ENCODE measurements at regions of chr4 and their contacts with region 1.

Region 1: GRCh38 chr4:114659386-114660008 is 60.9 kb downstream of the UGT8 start:
- DNase-seq: no peak
- ATAC-seq: peak; percentile 92
- H3K4me3 Mint-ChIP-seq: no peak overlapping the region
- H3K27ac Mint-ChIP-seq: peak overlapping the region; percentile 46
- H3K4me1 Mint-ChIP-seq: peaks cover 14% of the 10 kb centered on the region
- H3K27me3 Mint-ChIP-seq: no peaks in the 10 kb centered on the region
- CTCF ChIP-seq: no peak

Region 2: DNA sequence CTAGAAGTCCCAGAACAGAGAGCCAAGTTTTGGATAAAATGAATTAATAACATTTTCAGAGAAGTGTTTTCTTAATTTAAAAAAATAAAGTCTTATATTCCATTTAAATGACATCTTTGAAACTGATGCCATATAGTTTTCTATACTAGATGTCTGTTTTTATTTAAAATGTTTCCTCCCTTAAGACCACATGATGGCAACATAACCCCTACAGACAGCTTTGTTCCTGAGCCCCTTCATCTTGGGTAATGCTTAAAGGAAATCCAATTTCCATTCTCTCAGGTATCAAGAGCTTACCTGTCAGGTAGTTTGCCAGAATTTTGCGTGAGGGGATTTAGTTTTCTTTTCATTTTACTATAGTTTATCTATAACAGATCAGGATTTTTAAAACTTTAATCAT is 242.3 kb before region 1 on chr4:
- CTCF ChIA-PET with region 1: interaction called, 8 read pairs
- POLR2A ChIA-PET with region 1: no interaction called
- intact Hi-C with region 1: loop called (anchors 1 kb)
- DNase-seq: no peak
- ATAC-seq: no peak
- H3K4me3 Mint-ChIP-seq: no peak overlapping the region
- H3K27ac Mint-ChIP-seq: no peak overlapping the region
- H3K4me1 Mint-ChIP-seq: no peaks in the 10 kb centered on the region
- H3K27me3 Mint-ChIP-seq: peaks cover 1% of the 10 kb centered on the region
- CTCF ChIP-seq: no peak

Region 3: DNA sequence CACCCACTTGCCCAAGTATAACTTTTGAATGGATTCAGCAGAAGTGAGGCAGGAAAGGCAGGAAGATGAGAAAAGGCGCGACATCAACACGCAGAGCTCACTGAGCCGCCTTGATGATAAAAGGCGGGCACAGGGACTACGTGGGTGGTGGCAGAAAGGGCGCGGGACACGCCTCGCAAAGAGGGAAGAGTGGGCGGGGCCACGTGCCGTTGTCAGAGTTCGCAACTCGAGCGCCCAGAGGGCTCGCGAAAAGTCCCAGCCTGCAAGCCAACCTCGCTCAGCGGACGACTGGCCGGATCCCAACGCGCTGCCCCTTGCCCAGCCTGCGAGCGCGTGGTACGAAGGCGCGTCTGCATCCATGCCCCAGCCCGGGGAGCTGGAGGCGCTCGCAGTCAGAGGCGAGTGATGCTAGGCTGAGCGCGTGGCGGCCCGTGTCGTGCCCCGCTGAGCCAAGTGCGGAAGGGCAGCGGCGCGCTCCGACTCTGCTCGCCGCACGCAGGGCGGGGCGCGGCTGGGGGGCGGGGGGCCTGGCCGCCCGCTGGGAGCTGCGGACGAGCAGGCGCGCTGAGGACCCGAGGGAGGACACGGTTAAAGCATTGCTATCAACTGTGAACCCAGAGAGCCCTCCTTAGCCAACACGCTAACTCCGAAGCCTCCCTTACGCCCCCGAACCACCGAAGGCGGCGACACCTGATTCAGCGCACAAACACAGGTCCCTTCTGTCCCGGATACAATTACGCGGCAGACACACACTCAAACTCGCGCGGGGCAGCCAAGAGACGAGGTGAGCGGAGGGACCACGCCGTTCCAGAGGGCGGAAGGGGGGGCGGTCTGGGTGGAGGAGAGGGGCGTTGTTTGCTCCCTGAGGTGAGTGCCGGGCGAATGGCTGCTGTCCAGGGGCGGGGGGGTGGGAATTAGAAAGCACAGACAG is 61.0 kb before region 1 on chr4 and contains the start of gene UGT8:
- CTCF ChIA-PET with region 1: interaction called, 6 read pairs
- POLR2A ChIA-PET with region 1: interaction called, 3 read pairs
- intact Hi-C with region 1: loop called (anchors 1 kb)
- DNase-seq: peak; percentile 83
- ATAC-seq: peak; percentile 75
- H3K4me3 Mint-ChIP-seq: peak within 1 kb of the TSS; percentile 97
- H3K27ac Mint-ChIP-seq: peak within 1 kb of the TSS; percentile 90
- H3K4me1 Mint-ChIP-seq: peaks cover 22% of the 10 kb centered on the region
- H3K27me3 Mint-ChIP-seq: no peaks in the 10 kb centered on the region
- CTCF ChIP-seq: no peak
- total RNA-seq, gene UGT8: 12.9 and 20.0 TPM in 2 replicates

Region 4: GRCh38 chr4:114636192-114636935 is 23.1 kb before region 1 on chr4:
- CTCF ChIA-PET with region 1: interaction called, 3 read pairs
- POLR2A ChIA-PET with region 1: no interaction called
- intact Hi-C with region 1: loop called (anchors 2 kb)
- DNase-seq: no peak
- ATAC-seq: no peak
- H3K4me3 Mint-ChIP-seq: no peak overlapping the region
- H3K27ac Mint-ChIP-seq: no peak overlapping the region
- H3K4me1 Mint-ChIP-seq: peaks cover 42% of the 10 kb centered on the region
- H3K27me3 Mint-ChIP-seq: no peaks in the 10 kb centered on the region
- CTCF ChIP-seq: no peak

Region 5: DNA sequence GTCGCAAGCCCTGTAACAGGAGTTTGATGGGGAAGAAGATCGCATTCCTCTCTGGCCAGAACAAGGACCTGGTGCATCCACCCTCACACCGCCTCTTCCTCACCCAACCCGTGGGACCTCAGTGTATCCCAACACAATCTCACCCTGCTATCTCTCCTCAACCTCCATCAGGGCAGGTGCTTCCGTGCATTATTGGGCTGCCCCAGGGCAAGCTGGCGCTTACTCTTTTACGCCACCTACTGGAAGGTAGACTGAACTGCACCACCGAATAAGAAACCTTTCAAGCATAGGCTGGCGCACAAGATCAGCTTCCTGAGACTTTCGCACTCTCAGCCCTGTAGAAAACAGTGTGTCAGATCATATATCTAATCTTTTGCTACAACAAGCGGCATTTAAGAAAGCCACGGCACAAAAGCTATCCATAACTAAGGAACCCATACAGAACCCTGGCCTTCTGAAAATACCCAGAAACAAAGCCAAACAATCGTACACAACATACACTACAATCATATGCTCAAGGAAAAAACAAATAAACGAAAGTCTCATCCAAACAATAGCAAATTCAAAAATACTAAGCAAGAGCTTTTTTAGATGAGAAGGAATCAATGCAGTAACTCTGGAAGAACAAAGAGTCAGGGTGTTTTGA is 148.4 kb after region 1 on chr4:
- CTCF ChIA-PET with region 1: interaction called, 3 read pairs
- POLR2A ChIA-PET with region 1: no interaction called
- intact Hi-C with region 1: loop called (anchors 5 kb)
- DNase-seq: peak; percentile 15
- ATAC-seq: peak; percentile 87
- H3K4me3 Mint-ChIP-seq: no peak overlapping the region
- H3K27ac Mint-ChIP-seq: no peak overlapping the region
- H3K4me1 Mint-ChIP-seq: no peaks in the 10 kb centered on the region
- H3K27me3 Mint-ChIP-seq: no peaks in the 10 kb centered on the region
- CTCF ChIP-seq: no peak